Naive thymus-derived CD4-positive, alpha-beta T cell (primary cell): ENCODE measurements at regions of chr3 and their contacts with region 1.

Region 1: GRCh38 chr3:66302288-66302687 is 81.5 kb downstream of the SLC25A26 start:
- DNase-seq: peak in 7 of 9 donors; percentile 44 to 78 (median 64)
- ATAC-seq: peak; percentile 87
- H3K4me3 ChIP-seq: no peak overlapping the region
- H3K4me3 Mint-ChIP-seq: peak overlapping the region in 9 of 10 donors; percentile 29 to 71 (median 50)
- H3K27ac ChIP-seq: peak overlapping the region; percentile 53
- H3K27ac Mint-ChIP-seq: peak overlapping the region; percentile 71 to 99 (median 94)
- H3K4me1 ChIP-seq: peaks cover 49 to 79% of the 10 kb centered on the region in 2 donors
- H3K4me1 Mint-ChIP-seq: peaks cover 50 to 86% (median 69%) of the 10 kb centered on the region in 7 donors
- H3K27me3 ChIP-seq: no peaks in the 10 kb centered on the region
- H3K27me3 Mint-ChIP-seq: no peaks in the 10 kb centered on the region

Region 2: DNA sequence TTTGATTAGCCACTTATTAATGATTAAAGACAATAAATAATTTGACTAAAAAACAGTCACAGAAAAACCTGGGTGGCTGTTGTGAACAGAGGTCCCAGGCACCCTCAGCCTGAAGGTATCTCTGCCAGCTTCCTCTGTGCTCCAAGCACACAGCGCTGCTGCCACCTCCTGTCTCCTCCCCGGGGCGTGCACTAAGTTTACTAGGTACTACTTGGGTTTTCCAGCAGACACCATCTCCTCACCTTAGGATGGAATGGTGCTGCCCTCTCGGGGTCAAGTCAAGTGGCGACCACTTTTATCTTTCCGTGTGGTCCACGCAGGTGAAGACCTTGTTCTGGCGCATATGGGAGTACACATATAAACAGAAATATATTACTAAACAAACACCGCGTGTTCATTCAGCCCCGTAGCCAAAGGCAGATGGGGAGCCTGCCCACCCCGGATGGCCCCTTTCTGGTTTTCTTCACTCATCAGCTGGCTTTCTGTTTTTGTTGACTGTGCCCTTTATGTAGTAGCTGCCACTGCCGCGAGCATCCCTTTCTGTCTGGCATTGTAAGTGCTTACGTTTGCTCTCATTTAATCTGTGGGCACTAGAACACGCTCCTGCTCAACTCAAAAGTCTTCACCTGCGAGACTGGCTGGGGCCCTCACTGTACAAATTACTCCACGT is 70.5 kb after region 1 on chr3:
- CTCF ChIA-PET with region 1: no interaction called
- POLR2A ChIA-PET with region 1: interaction called, 3 read pairs
- intact Hi-C with region 1: loop called in 1 of 2 experiments (anchors 5 kb)
- DNase-seq: peak in 2 of 9 donors; percentile 9 to 15
- ATAC-seq: peak; percentile 60
- H3K4me3 ChIP-seq: no peak overlapping the region
- H3K4me3 Mint-ChIP-seq: no peak overlapping the region
- H3K27ac ChIP-seq: no peak overlapping the region
- H3K27ac Mint-ChIP-seq: peak overlapping the region in 4 of 9 donors; percentile 10 to 63 (median 37)
- H3K4me1 ChIP-seq: peaks cover 3 to 13% of the 10 kb centered on the region in 2 donors
- H3K4me1 Mint-ChIP-seq: peaks cover 2 to 13% (median 2%) of the 10 kb centered on the region in 7 donors
- H3K27me3 ChIP-seq: no peaks in the 10 kb centered on the region
- H3K27me3 Mint-ChIP-seq: no peaks in the 10 kb centered on the region

Region 3: GRCh38 chr3:66472313-66473134 is 170.2 kb after region 1 on chr3:
- CTCF ChIA-PET with region 1: no interaction called
- POLR2A ChIA-PET with region 1: no interaction called
- intact Hi-C with region 1: loop called in 1 of 2 experiments (anchors 2 kb)
- DNase-seq: peak in 1 of 9 donors; percentile 52
- ATAC-seq: peak; percentile 74
- H3K4me3 ChIP-seq: peak overlapping the region; percentile 19
- H3K4me3 Mint-ChIP-seq: peak overlapping the region in 8 of 10 donors; percentile 0 to 70 (median 26)
- H3K27ac ChIP-seq: no peak overlapping the region
- H3K27ac Mint-ChIP-seq: peak overlapping the region in 2 of 9 donors; percentile 29 to 88
- H3K4me1 ChIP-seq: peaks cover 8 to 23% of the 10 kb centered on the region in 2 donors
- H3K4me1 Mint-ChIP-seq: peaks cover 13 to 44% (median 30%) of the 10 kb centered on the region in 7 donors
- H3K27me3 ChIP-seq: no peaks in the 10 kb centered on the region
- H3K27me3 Mint-ChIP-seq: no peaks in the 10 kb centered on the region